HCT116 (cell line): ENCODE measurements at regions of chr7 and their contacts with region 1.

Region 1: DNA sequence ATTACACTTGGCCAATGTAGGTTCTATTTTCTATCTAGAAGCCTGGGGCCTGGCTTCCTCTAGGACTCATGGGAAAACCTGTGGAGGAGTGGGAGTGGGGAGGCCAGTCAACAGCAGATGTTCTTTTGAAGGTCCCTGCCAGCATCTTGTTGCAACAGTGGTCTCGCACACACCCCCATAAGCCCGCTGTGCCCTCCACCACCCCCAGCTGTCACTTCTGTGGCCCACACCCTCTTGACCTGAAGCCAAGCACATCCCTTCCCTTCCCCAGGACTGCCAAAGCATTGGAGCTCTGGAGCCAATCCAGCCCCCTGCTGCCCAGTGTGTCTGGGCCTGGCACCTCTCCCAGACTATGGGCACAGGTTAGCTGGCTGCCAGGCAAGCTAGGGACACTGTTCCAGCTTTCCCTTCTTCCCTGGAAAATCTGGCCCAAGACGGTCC is 1.9 kb upstream of the STX1A start:
- DNase-seq: no peak
- ATAC-seq: no peak
- H3K4me3 ChIP-seq: no peak overlapping the region
- H3K27ac ChIP-seq: peak overlapping the region; percentile 1; the same call in 1 of the 2 replicates
- H3K4me1 ChIP-seq: peaks cover 46 to 57% of the 10 kb centered on the region in 2 experiments
- H3K27me3 ChIP-seq: no peaks in the 10 kb centered on the region
- CTCF ChIP-seq: no peak
- POLR2A ChIP-seq: no peak
- RAD21 ChIP-seq: no peak

Region 2: GRCh38 chr7:73522105-73522872 is 199.1 kb before region 1 on chr7 and contains the start of gene BAZ1B:
- CTCF ChIA-PET with region 1: no interaction called
- POLR2A ChIA-PET with region 1: no interaction called
- RAD21 ChIA-PET with region 1: interaction called in 1 of 2 experiments, 4 read pairs
- intact Hi-C with region 1: loop called (anchors 5 kb)
- DNase-seq: peak; percentile 96
- ATAC-seq: peak; percentile 93
- H3K4me3 ChIP-seq: peak within 1 kb of the TSS; percentile 86 to 87
- H3K27ac ChIP-seq: peak within 1 kb of the TSS; percentile 96
- H3K4me1 ChIP-seq: peaks cover 15 to 27% of the 10 kb centered on the region in 2 experiments; a peak in 3 of 4 replicates
- H3K27me3 ChIP-seq: no peaks in the 10 kb centered on the region
- CTCF ChIP-seq: no peak; a peak in 1 of 6 replicates
- POLR2A ChIP-seq: no peak
- RAD21 ChIP-seq: no peak
- total RNA-seq, gene BAZ1B: 81.1 TPM

Region 3: GRCh38 chr7:73606801-73607691 is 114.4 kb before region 1 on chr7:
- CTCF ChIA-PET with region 1: interaction called, 28 read pairs
- POLR2A ChIA-PET with region 1: interaction called, 3 read pairs
- RAD21 ChIA-PET with region 1: interaction called, 6 to 7 read pairs
- intact Hi-C with region 1: loop called (anchors 1 kb)
- DNase-seq: no peak
- ATAC-seq: peak; percentile 71
- H3K4me3 ChIP-seq: no peak overlapping the region
- H3K27ac ChIP-seq: no peak overlapping the region
- H3K4me1 ChIP-seq: peaks cover 16 to 40% of the 10 kb centered on the region in 2 experiments
- H3K27me3 ChIP-seq: no peaks in the 10 kb centered on the region
- CTCF ChIP-seq: peak; percentile 89 to 99 (median 94)
- POLR2A ChIP-seq: no peak
- RAD21 ChIP-seq: peak; percentile 93

Region 4: GRCh38 chr7:73667344-73668102 is 53.9 kb before region 1 on chr7 and contains the start of gene VPS37D:
- CTCF ChIA-PET with region 1: no interaction called
- POLR2A ChIA-PET with region 1: no interaction called
- RAD21 ChIA-PET with region 1: no interaction called
- intact Hi-C with region 1: loop called (anchors 10 kb)
- DNase-seq: peak; percentile 67
- ATAC-seq: peak; percentile 85
- H3K4me3 ChIP-seq: peak within 1 kb of the TSS; percentile 68 to 69
- H3K27ac ChIP-seq: peak within 1 kb of the TSS; percentile 66; the same call in 1 of the 2 replicates
- H3K4me1 ChIP-seq: peaks cover 33 to 46% of the 10 kb centered on the region in 2 experiments
- H3K27me3 ChIP-seq: no peaks in the 10 kb centered on the region
- CTCF ChIP-seq: peak; percentile 57 to 68 (median 61); a peak in 5 of 6 replicates
- POLR2A ChIP-seq: no peak
- RAD21 ChIP-seq: peak; percentile 72
- total RNA-seq, gene VPS37D: 9.5 TPM